Ascending aorta (tissue), 2 donors: ENCODE measurements at regions of chr7 and their contacts with region 1.

Region 1: GRCh38 chr7:35037526-35038339 is 448 bp upstream of the DPY19L1 start:
- DNase-seq: peak; percentile 79 to 97
- H3K4me3 ChIP-seq: peak overlapping the region; percentile 64 to 78
- H3K27ac ChIP-seq: peak overlapping the region; percentile 76 to 93
- H3K4me1 ChIP-seq: peaks cover 0 to 5% of the 10 kb centered on the region in 2 donors
- H3K27me3 ChIP-seq: no peaks in the 10 kb centered on the region
- CTCF ChIP-seq: peak; percentile 79 to 95 (median 92)

Region 2: GRCh38 chr7:33128990-33129805 is 1908.5 kb before region 1 on chr7 and contains the start of gene BBS9:
- intact Hi-C with region 1: loop called (anchors 5 kb)
- DNase-seq: peak; percentile 73 to 96
- H3K4me3 ChIP-seq: peak within 1 kb of the TSS; percentile 84 to 96
- H3K27ac ChIP-seq: peak within 1 kb of the TSS; percentile 30 to 77
- H3K4me1 ChIP-seq: peaks cover 0 to 8% of the 10 kb centered on the region in 2 donors
- H3K27me3 ChIP-seq: no peaks in the 10 kb centered on the region
- CTCF ChIP-seq: no peak
- total RNA-seq, gene BBS9: 23.3 TPM

Region 3: DNA sequence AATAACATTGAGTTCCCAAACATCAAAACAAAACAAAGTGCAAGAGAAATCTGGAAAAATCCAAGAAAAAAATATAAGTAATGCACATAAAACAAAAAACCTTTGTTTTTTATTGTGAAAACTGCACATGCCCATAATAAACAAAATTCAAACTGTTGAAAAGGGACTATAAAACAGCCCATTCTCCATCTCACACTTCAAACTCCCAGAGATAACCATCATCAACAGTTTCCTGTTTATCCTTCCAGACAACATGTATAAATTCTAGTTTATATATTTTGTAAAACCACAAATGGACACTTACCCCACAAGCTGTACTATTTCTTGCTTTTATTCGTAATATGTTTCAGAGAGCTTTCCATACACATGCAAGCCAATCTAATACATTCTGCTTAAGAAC is 79.7 kb before region 1 on chr7:
- intact Hi-C with region 1: no loop called
- DNase-seq: no peak
- H3K4me3 ChIP-seq: no peak overlapping the region
- H3K27ac ChIP-seq: no peak overlapping the region
- H3K4me1 ChIP-seq: no peaks in the 10 kb centered on the region
- H3K27me3 ChIP-seq: no peaks in the 10 kb centered on the region
- CTCF ChIP-seq: no peak

Region 4: GRCh38 chr7:35025046-35025994 is 12.4 kb before region 1 on chr7:
- intact Hi-C with region 1: no loop called
- DNase-seq: no peak
- H3K4me3 ChIP-seq: no peak overlapping the region
- H3K27ac ChIP-seq: no peak overlapping the region
- H3K4me1 ChIP-seq: peaks cover 0 to 3% of the 10 kb centered on the region in 2 donors
- H3K27me3 ChIP-seq: no peaks in the 10 kb centered on the region
- CTCF ChIP-seq: no peak

Region 5: GRCh38 chr7:35694781-35695472 is 657.2 kb after region 1 on chr7 and contains the start of gene HERPUD2:
- intact Hi-C with region 1: loop called (anchors 5 kb)
- DNase-seq: peak; percentile 76 to 95
- H3K4me3 ChIP-seq: peak within 1 kb of the TSS; percentile 81 to 86
- H3K27ac ChIP-seq: peak within 1 kb of the TSS; percentile 93 to 97
- H3K4me1 ChIP-seq: peaks cover 3 to 21% of the 10 kb centered on the region in 2 donors
- H3K27me3 ChIP-seq: no peaks in the 10 kb centered on the region
- CTCF ChIP-seq: no peak
- total RNA-seq, gene HERPUD2: 69.8 TPM

Region 6: DNA sequence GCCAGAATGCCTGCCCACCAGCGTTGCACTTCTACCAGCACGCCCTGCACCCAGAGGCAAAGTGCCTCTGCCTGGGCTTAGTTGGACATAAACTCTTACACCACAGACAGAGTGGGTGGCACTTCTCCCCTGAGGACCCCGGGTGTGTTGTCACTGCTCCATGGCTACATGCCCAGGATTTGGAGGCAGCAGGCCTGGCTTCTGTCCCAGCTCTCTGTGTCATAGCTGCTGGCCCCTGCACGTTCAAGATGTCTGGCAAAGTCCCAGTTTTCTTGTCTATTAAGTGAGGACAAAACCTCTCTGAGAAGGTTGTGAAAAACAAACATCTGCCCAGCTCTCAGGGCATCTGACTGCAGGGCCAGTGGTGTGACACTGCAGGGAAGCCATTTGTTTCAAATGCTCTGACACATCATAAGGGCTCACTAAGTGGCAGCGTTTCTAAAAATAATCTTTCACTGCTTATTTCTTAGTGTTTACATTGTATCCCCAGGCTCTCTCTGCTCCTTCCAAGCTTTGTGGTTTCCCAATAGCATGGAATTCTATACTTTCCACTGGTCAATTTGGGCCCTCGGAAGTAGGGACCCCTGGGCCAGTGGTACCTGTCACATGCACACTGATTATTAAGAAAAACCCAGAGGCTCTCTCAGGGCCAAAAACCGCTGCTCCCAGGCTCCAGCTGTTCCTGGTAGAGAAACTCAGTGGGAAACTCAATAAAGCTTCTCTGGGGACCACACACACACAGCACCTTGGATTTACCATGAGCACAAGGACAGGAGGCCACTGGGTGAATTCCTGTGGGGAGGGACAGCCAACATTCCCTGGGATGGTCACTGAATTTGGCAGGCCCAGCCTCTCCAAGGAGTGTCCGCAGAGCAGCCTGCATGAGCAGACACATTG is 1265.7 kb after region 1 on chr7:
- intact Hi-C with region 1: loop called (anchors 5 kb)
- DNase-seq: peak; percentile 76 to 97
- H3K4me3 ChIP-seq: no peak overlapping the region
- H3K27ac ChIP-seq: peak overlapping the region; percentile 70 to 88
- H3K4me1 ChIP-seq: peaks cover 5 to 25% of the 10 kb centered on the region in 2 donors
- H3K27me3 ChIP-seq: no peaks in the 10 kb centered on the region
- CTCF ChIP-seq: no peak

Region 7: DNA sequence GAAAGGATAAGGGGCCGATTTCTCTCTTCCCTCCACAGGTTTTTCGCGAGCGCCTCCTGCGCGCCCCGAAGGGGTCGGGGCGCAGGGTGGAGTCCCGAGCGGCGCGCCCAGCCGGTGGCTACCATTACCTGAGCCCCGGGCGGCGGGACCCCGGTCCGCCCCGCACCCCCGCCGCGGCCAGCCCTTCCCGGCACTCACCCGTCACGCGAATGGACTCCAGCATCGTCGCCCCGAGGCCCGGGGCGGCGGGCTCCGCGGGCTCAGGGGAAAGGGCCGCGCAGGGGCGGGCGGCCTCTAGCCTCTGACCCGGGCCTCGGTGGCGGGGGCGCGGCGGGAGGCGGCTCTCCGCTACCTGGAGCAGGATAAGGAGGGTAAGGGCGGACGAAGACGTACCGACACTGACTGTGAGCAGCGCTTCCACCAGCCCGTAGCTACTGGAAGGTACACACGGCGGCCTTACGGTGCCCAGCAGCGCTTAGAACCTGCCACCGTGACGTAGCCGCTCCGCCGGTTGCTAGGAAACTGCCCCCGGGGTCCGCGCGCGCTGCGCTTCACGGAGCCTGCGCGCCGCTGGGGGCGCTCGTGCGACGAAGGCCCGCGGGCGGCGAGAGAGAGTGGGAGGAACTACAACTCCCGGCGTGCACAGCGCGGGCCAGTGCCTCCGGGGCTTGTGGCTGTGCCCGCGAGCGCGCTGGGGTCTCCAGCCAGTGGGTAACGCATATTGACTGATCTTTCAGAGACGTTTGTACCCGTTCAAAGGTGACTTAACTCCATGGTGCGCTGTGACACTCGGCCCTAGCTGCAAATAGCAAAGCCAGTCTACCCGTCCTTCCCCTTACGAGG is 1329.2 kb after region 1 on chr7:
- intact Hi-C with region 1: loop called (anchors 10 kb)
- DNase-seq: peak; percentile 32 to 94
- H3K4me3 ChIP-seq: peak overlapping the region; percentile 74 to 93
- H3K27ac ChIP-seq: peak overlapping the region; percentile 54 to 77
- H3K4me1 ChIP-seq: peaks cover 0 to 3% of the 10 kb centered on the region in 2 donors
- H3K27me3 ChIP-seq: no peaks in the 10 kb centered on the region
- CTCF ChIP-seq: peak; percentile 90 to 95 (median 94)

Region 8: DNA sequence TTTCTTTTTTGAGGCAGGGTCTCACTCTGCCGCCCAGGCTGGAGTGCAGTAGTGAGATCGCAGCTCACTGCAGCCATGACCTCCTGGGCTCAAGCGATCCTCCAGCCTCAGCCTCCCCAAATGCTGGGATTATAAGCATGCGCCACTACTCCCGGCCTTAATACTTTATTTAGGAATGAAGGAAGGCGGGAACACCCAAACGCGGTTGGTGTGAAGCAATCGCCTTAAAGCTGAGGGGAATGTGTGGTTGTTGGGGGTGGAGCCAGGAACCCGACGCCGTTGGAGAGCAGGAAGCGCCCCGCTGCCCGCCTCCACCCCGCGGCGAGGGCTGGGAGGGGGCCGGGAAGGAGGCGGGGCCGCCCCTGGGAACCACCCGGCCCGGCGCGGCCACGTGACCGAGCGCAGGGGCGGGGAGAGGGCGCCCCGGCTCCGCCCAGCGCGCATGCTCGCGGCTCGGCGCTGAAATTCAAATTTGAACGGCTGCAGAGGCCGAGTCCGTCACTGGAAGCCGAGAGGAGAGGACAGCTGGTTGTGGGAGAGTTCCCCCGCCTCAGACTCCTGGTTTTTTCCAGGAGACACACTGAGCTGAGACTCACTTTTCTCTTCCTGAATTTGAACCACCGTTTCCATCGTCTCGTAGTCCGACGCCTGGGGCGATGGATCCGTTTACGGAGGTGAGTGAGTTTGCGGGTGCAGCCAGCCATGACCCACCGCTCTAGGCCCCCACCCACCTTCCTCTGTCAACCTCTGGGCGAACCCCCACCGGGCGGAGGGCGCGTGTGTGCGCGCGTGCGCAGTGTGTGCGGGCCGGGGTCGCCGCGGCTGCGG is 1351.9 kb after region 1 on chr7 and contains the start of gene ANLN:
- intact Hi-C with region 1: loop called (anchors 5 kb)
- DNase-seq: peak; percentile 70 to 97
- H3K4me3 ChIP-seq: peak within 1 kb of the TSS; percentile 53 to 77
- H3K27ac ChIP-seq: peak within 1 kb of the TSS; percentile 83 to 87
- H3K4me1 ChIP-seq: peaks cover 0 to 10% of the 10 kb centered on the region in 2 donors
- H3K27me3 ChIP-seq: no peaks in the 10 kb centered on the region
- CTCF ChIP-seq: no peak
- total RNA-seq, gene ANLN: 1.8 TPM